Right lobe of liver (tissue), 6 donors: ENCODE measurements at regions of chr11 and their contacts with region 1.

Region 1: GRCh38 chr11:65274735-65275682 is 13.2 kb downstream of the POLA2 start:
- DNase-seq: peak in 2 of 3 donors; percentile 60 to 86
- ATAC-seq: peak; percentile 92 to 96 (median 95)
- H3K4me3 ChIP-seq: no peak overlapping the region
- H3K27ac ChIP-seq: peak overlapping the region; percentile 16 to 30 (median 20)
- H3K4me1 ChIP-seq: peaks cover 0 to 15% (median 7%) of the 10 kb centered on the region in 4 donors
- H3K27me3 ChIP-seq: no peaks in the 10 kb centered on the region
- CTCF ChIP-seq: peak; percentile 78 to 95 (median 82)
- POLR2A ChIP-seq: no peak

Region 2: GRCh38 chr11:65314501-65315203 is 39.6 kb after region 1 on chr11 and contains the start of gene CDC42EP2:
- intact Hi-C with region 1: loop called (anchors 5 kb)
- DNase-seq: peak; percentile 94 to 95 (median 94)
- ATAC-seq: peak; percentile 91 to 97 (median 94)
- H3K4me3 ChIP-seq: peak within 1 kb of the TSS; percentile 46 to 84 (median 84)
- H3K27ac ChIP-seq: peak within 1 kb of the TSS; percentile 74 to 76 (median 75)
- H3K4me1 ChIP-seq: peaks cover 0 to 6% (median 0%) of the 10 kb centered on the region in 4 donors
- H3K27me3 ChIP-seq: no peaks in the 10 kb centered on the region
- CTCF ChIP-seq: no peak
- POLR2A ChIP-seq: peak; percentile 68
- total RNA-seq, gene CDC42EP2: 0.55 to 3.4 (median 2.3) TPM

Region 3: DNA sequence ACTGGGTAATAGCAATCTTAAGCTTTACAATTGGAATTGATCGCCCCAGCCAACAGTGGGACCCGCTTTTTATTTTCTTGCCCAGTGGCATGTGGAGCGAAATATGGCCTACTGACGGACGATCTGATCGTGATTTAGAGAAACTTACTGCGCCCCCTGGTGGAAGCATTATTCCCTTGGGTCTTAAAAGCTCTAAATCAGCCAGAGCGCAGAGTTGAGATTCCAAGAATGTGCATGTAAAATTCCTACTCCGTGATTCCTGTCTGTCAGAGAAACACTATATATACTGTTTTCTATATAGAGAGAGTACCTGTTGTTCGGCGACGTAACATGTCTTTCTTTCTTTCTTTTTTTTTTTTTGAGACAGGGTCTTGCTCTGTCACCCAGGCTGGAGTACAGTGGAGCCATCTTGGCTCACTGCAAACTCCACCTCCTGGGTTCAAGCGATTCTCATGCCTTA is 55.0 kb after region 1 on chr11:
- intact Hi-C with region 1: loop called in 1 of 2 experiments (anchors 5 kb)
- DNase-seq: peak in 2 of 3 donors; percentile 70 to 87
- ATAC-seq: peak; percentile 51 to 64 (median 60)
- H3K4me3 ChIP-seq: no peak overlapping the region
- H3K27ac ChIP-seq: no peak overlapping the region
- H3K4me1 ChIP-seq: peaks cover 0 to 7% (median 3%) of the 10 kb centered on the region in 4 donors
- H3K27me3 ChIP-seq: no peaks in the 10 kb centered on the region
- CTCF ChIP-seq: peak; percentile 71 to 85 (median 80)
- POLR2A ChIP-seq: no peak